Posterior vena cava (tissue), 2 donors: ENCODE measurements at regions of chr4 and their contacts with region 1.

Region 1: GRCh38 chr4:134567461-134567860 is 365.9 kb upstream of the PABPC4L start:
- DNase-seq: no peak

Region 2: GRCh38 chr4:132860976-132861375 is 1706.5 kb before region 1 on chr4:
- intact Hi-C with region 1: loop called in 1 of 2 experiments (anchors 5 kb)
- DNase-seq: no peak